Activated naive CD4-positive, alpha-beta T cell treated with anti-CD3 and anti-CD28 coated beads, Interleukin-2, amount 10 ng/mL, durations not matched to agents 7 days and 5 days (primary cell): ENCODE measurements at regions of chr5 and their contacts with region 1.

Region 1: GRCh38 chr5:126776497-126777256 is at the start of gene LMNB1:
- DNase-seq: peak; percentile 96
- H3K4me3 Mint-ChIP-seq: peak within 1 kb of the TSS; percentile 96
- H3K27ac Mint-ChIP-seq: peak within 1 kb of the TSS; percentile 99
- H3K4me1 Mint-ChIP-seq: peaks cover 39% of the 10 kb centered on the region
- H3K27me3 Mint-ChIP-seq: no peaks in the 10 kb centered on the region

Region 2: DNA sequence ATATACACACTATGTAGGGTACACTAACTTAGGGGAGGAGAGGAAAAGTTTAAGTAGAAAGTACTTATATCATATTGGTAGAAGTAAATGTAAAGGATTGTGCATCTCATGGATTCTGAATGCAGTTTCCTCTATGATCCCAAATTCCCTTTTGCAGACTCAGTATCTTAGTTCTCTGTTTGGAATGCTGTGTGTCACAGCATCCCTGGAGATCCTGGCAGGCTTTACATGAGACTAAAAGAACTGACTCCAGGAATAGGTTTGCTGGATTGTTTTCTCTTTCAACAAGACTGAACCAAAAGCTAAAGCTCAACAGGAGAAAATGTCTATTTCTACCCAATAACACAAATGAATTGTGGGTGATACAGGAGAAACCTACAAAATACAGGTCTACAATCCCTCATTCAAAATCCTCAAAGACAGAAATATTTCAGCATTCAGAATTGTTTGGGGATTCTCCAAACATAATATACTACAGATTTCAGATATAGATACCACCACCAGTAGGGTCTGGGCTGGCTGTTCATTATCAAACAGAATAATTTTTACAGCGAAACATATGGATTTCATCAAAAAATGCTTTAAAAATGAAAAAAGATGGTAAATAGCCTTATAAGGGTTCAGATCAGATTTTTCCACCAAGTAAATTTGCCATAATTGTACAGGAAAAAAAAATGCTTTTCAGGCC is 678.2 kb before region 1 on chr5:
- CTCF ChIA-PET with region 1: no interaction called
- DNase-seq: no peak
- H3K4me3 Mint-ChIP-seq: no peak overlapping the region
- H3K27ac Mint-ChIP-seq: no peak overlapping the region
- H3K4me1 Mint-ChIP-seq: no peaks in the 10 kb centered on the region
- H3K27me3 Mint-ChIP-seq: no peaks in the 10 kb centered on the region

Region 3: GRCh38 chr5:126676195-126676624 is 100.5 kb before region 1 on chr5:
- CTCF ChIA-PET with region 1: interaction called, 298 read pairs
- DNase-seq: peak; percentile 78
- H3K4me3 Mint-ChIP-seq: no peak overlapping the region
- H3K27ac Mint-ChIP-seq: no peak overlapping the region
- H3K4me1 Mint-ChIP-seq: peaks cover 12% of the 10 kb centered on the region
- H3K27me3 Mint-ChIP-seq: peaks cover 5% of the 10 kb centered on the region

Region 4: GRCh38 chr5:126745259-126745992 is 31.3 kb before region 1 on chr5:
- CTCF ChIA-PET with region 1: interaction called, 24 read pairs
- DNase-seq: no peak
- H3K4me3 Mint-ChIP-seq: no peak overlapping the region
- H3K27ac Mint-ChIP-seq: no peak overlapping the region
- H3K4me1 Mint-ChIP-seq: peaks cover 32% of the 10 kb centered on the region
- H3K27me3 Mint-ChIP-seq: no peaks in the 10 kb centered on the region

Region 5: GRCh38 chr5:126801992-126802294 is 25.3 kb after region 1 on chr5:
- CTCF ChIA-PET with region 1: interaction called, 20 read pairs
- DNase-seq: peak; percentile 28
- H3K4me3 Mint-ChIP-seq: no peak overlapping the region
- H3K27ac Mint-ChIP-seq: peak overlapping the region; percentile 55
- H3K4me1 Mint-ChIP-seq: peaks cover 45% of the 10 kb centered on the region
- H3K27me3 Mint-ChIP-seq: no peaks in the 10 kb centered on the region

Region 6: GRCh38 chr5:126917918-126918614 is 141.4 kb after region 1 on chr5:
- CTCF ChIA-PET with region 1: no interaction called
- DNase-seq: no peak
- H3K4me3 Mint-ChIP-seq: no peak overlapping the region
- H3K27ac Mint-ChIP-seq: no peak overlapping the region
- H3K4me1 Mint-ChIP-seq: no peaks in the 10 kb centered on the region
- H3K27me3 Mint-ChIP-seq: no peaks in the 10 kb centered on the region

Region 7: GRCh38 chr5:126965061-126965475 is 188.4 kb after region 1 on chr5:
- CTCF ChIA-PET with region 1: no interaction called
- DNase-seq: no peak
- H3K4me3 Mint-ChIP-seq: no peak overlapping the region
- H3K27ac Mint-ChIP-seq: no peak overlapping the region
- H3K4me1 Mint-ChIP-seq: no peaks in the 10 kb centered on the region
- H3K27me3 Mint-ChIP-seq: no peaks in the 10 kb centered on the region